ENCODE measurements at regions of chr13 and their contacts with region 1.

Region 1: GRCh38 chr13:26985285-26985878 is 186.2 kb downstream of the USP12 start:
- DNase-seq: peak; percentile 87
- H3K4me3 ChIP-seq: no peak overlapping the region
- H3K27ac ChIP-seq: peak overlapping the region; percentile 82 to 88 (median 85)
- H3K4me1 ChIP-seq: peaks cover 0 to 65% (median 56%) of the 10 kb centered on the region in 4 donors
- H3K27me3 ChIP-seq: no peaks in the 10 kb centered on the region
- CTCF ChIP-seq: peak; percentile 68 to 86 (median 71)
- EP300 ChIP-seq: no peak
- POLR2A ChIP-seq: no peak

Region 2: DNA sequence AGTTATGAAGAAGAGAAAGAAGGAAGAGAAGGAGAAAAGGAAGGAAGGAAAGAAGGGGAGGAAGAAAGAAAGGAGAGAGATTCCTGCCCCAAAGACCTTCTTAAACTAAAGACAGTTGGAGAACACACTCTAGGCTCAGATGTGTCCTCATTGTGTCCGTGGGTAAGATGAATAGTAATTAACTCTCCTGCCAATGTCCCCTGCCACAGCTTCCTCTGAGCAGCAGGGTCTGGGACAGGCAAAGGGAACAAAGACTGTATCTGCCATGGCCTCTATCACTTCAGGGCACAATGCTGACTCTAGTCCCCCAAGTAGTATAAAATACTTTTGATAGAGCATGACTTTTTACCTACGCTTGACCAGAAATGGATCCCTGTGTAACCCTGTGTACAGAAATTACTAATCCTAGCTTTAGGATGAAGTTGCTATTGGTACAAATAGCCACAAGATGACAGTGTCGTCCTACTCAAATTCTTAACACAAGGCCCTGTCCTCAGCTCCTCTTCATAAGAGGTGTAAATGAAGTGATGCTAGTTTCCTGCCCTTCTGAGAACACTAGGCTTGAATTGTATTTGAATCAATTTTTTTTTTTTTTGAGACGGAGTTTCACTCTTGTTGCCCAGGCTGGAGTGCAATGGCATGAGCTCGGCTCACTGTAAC is 38.6 kb before region 1 on chr13:
- intact Hi-C with region 1: loop called (anchors 2 kb)
- DNase-seq: no peak
- H3K4me3 ChIP-seq: no peak overlapping the region
- H3K27ac ChIP-seq: no peak overlapping the region
- H3K4me1 ChIP-seq: peaks cover 0 to under 1% (median 0%) of the 10 kb centered on the region in 4 donors
- H3K27me3 ChIP-seq: peaks cover 0 to 7% (median 0%) of the 10 kb centered on the region in 3 donors
- CTCF ChIP-seq: peak; percentile 86 to 91 (median 90)
- EP300 ChIP-seq: no peak
- POLR2A ChIP-seq: no peak

Region 3: DNA sequence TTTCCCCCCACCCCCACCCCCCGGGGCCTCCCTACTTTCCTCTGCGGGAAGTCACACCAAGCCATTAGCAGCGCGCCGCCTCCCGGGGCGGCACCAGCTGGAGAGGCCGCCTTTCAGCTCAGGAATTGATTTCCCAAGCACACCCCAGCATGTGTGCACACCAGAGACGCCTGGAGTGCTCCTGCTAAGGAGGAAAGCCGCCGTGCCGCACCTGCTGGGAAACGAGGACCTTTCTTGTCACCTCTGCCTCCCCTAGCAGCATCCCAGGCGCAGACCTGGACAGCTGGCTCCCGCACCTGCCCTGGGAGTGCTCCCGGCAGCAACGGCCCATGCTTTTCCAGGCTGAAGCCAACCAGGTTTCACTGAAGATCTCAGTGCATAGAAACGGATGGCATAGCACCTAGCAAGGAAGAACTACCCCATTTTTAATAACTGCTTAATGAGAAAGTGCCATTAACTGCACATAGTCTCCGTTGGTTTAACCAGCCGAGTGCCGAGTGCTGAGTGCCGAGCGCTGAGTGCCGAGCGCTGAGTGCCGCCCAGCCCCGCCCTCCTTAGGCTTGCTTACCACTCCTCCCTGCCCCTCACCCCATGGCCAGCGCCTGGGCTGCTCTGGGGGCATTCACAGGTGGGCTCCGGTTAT is 21.3 kb after region 1 on chr13:
- intact Hi-C with region 1: no loop called
- DNase-seq: peak; percentile 70
- H3K4me3 ChIP-seq: peak overlapping the region; percentile 27 to 54 (median 50)
- H3K27ac ChIP-seq: peak overlapping the region; percentile 68 to 75 (median 72)
- H3K4me1 ChIP-seq: peaks cover 0 to 22% (median 21%) of the 10 kb centered on the region in 4 donors
- H3K27me3 ChIP-seq: no peaks in the 10 kb centered on the region
- CTCF ChIP-seq: no peak
- EP300 ChIP-seq: no peak
- POLR2A ChIP-seq: no peak

Region 4: DNA sequence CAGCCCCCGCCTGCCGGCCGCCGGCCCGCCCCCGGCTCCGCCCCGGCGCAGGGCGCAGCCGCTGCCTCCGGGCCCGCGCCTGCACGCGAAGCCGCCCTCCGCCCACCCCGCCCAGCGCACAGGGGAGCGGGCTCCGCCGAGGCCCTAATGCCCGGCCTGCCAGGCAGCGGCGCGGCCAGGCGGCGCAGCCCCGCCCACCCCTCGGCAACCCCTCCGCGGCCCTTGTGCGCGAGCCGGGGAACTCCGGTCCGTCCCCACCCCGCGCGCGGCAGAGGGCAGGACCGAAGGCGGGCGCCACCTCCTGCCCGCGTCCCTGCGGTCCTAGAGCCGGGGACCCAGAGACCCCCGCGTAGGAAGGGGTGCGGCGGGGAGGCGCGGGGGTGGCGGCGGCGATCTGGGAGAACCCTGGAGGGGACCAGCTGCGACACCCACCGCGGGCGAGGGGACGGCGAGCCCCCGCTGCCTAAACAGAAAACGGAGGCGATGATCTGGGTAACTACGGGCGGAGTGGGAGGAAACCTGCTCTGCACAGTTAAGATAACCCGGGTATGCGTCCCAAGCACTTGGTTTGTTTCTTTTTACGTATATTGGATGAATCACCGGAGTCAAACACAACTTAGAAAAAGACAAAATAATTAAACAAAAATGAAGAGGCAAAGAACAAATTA is 186.6 kb after region 1 on chr13:
- intact Hi-C with region 1: loop called (anchors 2 kb)
- DNase-seq: peak; percentile 96
- H3K4me3 ChIP-seq: peak overlapping the region; percentile 71 to 95 (median 92)
- H3K27ac ChIP-seq: peak overlapping the region; percentile 96 to 99 (median 98)
- H3K4me1 ChIP-seq: peaks cover 0 to 43% (median 39%) of the 10 kb centered on the region in 4 donors
- H3K27me3 ChIP-seq: no peaks in the 10 kb centered on the region
- CTCF ChIP-seq: no peak
- EP300 ChIP-seq: no peak
- POLR2A ChIP-seq: no peak

Region 5: GRCh38 chr13:27270594-27271520 is 285.5 kb after region 1 on chr13 and contains the start of gene RASL11A:
- intact Hi-C with region 1: loop called (anchors 5 kb)
- DNase-seq: peak; percentile 95
- H3K4me3 ChIP-seq: peak within 1 kb of the TSS; percentile 73 to 85 (median 79)
- H3K27ac ChIP-seq: peak within 1 kb of the TSS; percentile 92 to 96 (median 96)
- H3K4me1 ChIP-seq: peaks cover 0 to 41% (median 34%) of the 10 kb centered on the region in 4 donors
- H3K27me3 ChIP-seq: no peaks in the 10 kb centered on the region
- CTCF ChIP-seq: peak; percentile 77 to 99 (median 86)
- EP300 ChIP-seq: no peak
- POLR2A ChIP-seq: peak; percentile 61 to 69
- total RNA-seq, gene RASL11A: 14.1 to 123 (median 18.4) TPM

Region 6: DNA sequence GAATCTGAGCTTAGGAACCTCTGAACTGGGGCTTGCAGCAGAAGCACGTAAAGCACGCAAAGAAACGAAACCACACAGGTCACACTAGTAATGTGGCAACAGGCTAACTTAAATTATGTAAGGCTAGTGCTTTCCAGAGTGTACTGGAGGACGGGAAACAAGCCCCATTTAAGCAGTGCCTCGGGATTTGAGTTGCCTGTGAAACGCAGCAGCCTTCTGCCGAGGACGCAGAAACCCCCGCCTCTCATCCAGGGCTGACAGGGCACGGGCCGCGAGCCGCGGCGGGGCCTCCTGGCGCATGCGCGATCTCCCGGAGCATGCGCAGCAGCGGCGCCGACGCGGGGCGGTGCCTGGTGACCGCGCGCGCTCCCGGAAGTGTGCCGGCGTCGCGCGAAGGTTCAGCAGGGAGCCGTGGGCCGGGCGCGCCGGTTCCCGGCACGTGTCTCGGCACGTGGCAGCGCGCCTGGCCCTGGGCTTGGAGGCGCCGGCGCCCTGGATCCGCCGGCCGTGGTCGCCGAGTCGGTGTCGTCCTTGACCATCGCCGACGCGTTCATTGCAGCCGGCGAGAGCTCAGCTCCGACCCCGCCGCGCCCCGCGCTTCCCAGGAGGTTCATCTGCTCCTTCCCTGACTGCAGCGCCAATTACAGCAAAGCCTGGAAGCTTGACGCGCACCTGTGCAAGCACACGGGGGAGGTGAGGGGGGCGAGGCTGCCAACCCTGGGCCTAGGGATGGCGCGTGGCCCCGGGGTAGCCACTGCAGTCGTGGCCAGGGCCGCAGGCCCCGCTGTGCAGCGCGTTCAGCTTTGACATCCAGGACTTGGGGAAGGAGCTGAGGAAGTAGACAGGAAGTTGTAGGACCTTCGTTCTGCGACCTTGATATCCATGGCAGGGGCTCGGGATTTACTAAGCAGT is 439.1 kb after region 1 on chr13 and contains the start of gene GTF3A:
- intact Hi-C with region 1: loop called (anchors 10 kb)
- DNase-seq: peak; percentile 89
- H3K4me3 ChIP-seq: peak within 1 kb of the TSS; percentile 58 to 89 (median 84)
- H3K27ac ChIP-seq: peak within 1 kb of the TSS; percentile 85 to 91 (median 91)
- H3K4me1 ChIP-seq: peaks cover 0 to 38% (median 33%) of the 10 kb centered on the region in 4 donors
- H3K27me3 ChIP-seq: no peaks in the 10 kb centered on the region
- CTCF ChIP-seq: no peak
- EP300 ChIP-seq: no peak
- POLR2A ChIP-seq: peak; percentile 58 to 70
- total RNA-seq, gene GTF3A: 135 to 172 (median 154) TPM

Region 7: GRCh38 chr13:27638521-27638920 is 653.1 kb after region 1 on chr13:
- intact Hi-C with region 1: loop called (anchors 10 kb)
- DNase-seq: no peak
- H3K4me3 ChIP-seq: no peak overlapping the region
- H3K27ac ChIP-seq: peak overlapping the region; percentile 57 to 80 (median 72)
- H3K4me1 ChIP-seq: peaks cover 0 to 77% (median 66%) of the 10 kb centered on the region in 4 donors
- H3K27me3 ChIP-seq: no peaks in the 10 kb centered on the region
- CTCF ChIP-seq: no peak
- EP300 ChIP-seq: no peak
- POLR2A ChIP-seq: no peak

Region 8: GRCh38 chr13:28138012-28138755 is 1152.8 kb after region 1 on chr13 and contains the start of gene PAN3:
- intact Hi-C with region 1: loop called (anchors 10 kb)
- DNase-seq: peak; percentile 95
- H3K4me3 ChIP-seq: peak within 1 kb of the TSS; percentile 74 to 100 (median 99)
- H3K27ac ChIP-seq: peak within 1 kb of the TSS; percentile 94 to 100 (median 99)
- H3K4me1 ChIP-seq: peaks cover 0 to 30% (median 27%) of the 10 kb centered on the region in 4 donors
- H3K27me3 ChIP-seq: no peaks in the 10 kb centered on the region
- CTCF ChIP-seq: no peak
- EP300 ChIP-seq: peak in 1 of 4 donors; percentile 40
- POLR2A ChIP-seq: peak; percentile 26 to 43
- total RNA-seq, gene PAN3: 39.2 to 43.3 (median 41.7) TPM